WTC11 (cell line): ENCODE measurements at regions of chr19 and their contacts with region 1.

Region 1: DNA sequence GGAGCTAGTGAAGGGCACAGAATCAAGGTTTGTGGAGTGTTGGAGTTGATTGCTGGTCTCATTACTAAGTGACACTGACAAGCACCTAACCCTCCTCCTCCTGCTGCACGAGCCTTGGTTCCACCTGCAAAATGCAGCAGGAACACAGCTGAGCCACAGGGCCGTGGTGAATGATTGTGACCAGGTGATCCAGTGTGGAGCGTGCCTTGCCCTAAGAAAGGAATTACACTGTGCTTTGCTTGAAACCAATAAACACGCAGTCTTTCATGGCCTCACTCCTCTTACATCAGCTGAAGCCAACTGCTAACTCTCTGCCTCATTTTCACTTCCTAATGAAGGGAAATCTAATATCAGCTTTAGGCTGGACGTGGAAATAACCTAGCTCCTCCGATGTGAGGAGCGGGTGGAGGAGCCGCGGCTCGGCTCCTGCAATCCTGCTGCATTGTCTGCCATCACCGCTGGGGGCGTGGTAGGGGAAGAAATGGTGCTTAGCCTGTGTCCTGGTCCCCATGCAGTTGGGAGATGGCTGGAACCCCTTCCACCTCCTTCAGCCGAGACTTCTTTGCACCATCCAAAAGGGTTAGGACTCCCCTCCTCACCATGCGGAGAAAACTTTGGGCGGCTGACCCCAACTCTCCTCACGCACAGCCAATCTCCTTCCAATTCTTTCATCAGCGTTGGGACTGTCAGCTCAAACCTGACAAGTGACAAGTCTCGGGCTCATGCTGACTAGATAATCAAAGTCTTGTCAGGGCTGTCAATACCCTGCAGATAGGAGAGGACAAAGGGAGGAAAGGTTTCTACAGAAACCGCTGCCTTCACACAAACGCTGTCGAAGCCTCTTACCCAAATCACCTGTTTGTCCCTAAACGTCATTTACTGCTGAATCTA is 427.9 kb downstream of the ZNF536 start:
- DNase-seq: peak; percentile 87
- ATAC-seq: peak; percentile 94
- H3K4me3 Mint-ChIP-seq: no peak overlapping the region
- H3K27ac Mint-ChIP-seq: no peak overlapping the region
- H3K4me1 Mint-ChIP-seq: peaks cover 27% of the 10 kb centered on the region
- H3K27me3 Mint-ChIP-seq: peaks cover 15% of the 10 kb centered on the region
- CTCF ChIP-seq: peak; percentile 75

Region 2: GRCh38 chr19:30621326-30621920 is 178.7 kb before region 1 on chr19:
- CTCF ChIA-PET with region 1: no interaction called
- POLR2A ChIA-PET with region 1: no interaction called
- DNase-seq: no peak
- ATAC-seq: no peak
- H3K4me3 Mint-ChIP-seq: no peak overlapping the region
- H3K27ac Mint-ChIP-seq: no peak overlapping the region
- H3K4me1 Mint-ChIP-seq: peaks cover 11% of the 10 kb centered on the region; the same call in 1 of the 2 replicates
- H3K27me3 Mint-ChIP-seq: 0 out of 2 replicates have a peak, but pooled peaks cover 4% of the 10 kb centered on the region
- CTCF ChIP-seq: no peak

Region 3: DNA sequence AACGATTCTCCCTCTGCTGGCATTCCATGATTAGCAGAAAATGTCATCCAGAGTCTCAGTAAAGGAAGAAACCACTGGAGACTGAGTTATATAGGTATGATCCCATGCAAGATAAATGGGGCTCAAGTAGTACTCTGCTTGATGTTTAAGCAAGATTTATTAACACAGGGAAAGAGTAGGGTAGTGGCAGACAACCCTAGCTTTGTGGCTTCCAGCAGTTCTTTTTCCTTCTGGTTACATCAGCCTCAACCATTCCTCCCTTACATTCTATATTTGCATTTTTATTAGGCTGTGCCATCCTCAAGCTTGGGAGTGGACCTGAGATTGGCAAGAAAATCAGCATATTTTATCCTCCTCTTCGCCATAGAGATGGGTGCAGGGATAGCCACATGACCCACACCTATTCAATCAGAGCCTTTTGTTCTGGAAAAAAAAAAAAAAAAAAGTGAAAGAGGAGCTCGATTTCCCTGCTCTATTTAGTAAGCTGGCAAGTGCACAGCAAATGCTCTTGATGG is 25.8 kb before region 1 on chr19:
- CTCF ChIA-PET with region 1: interaction called, 10 read pairs
- POLR2A ChIA-PET with region 1: no interaction called
- DNase-seq: no peak
- ATAC-seq: no peak
- H3K4me3 Mint-ChIP-seq: no peak overlapping the region
- H3K27ac Mint-ChIP-seq: no peak overlapping the region
- H3K4me1 Mint-ChIP-seq: peaks cover 4% of the 10 kb centered on the region; the same call in 1 of the 2 replicates
- H3K27me3 Mint-ChIP-seq: no peaks in the 10 kb centered on the region
- CTCF ChIP-seq: no peak

Region 4: GRCh38 chr19:30812099-30812678 is 12.1 kb after region 1 on chr19:
- CTCF ChIA-PET with region 1: interaction called, 40 read pairs
- POLR2A ChIA-PET with region 1: no interaction called
- DNase-seq: no peak
- ATAC-seq: no peak
- H3K4me3 Mint-ChIP-seq: no peak overlapping the region
- H3K27ac Mint-ChIP-seq: no peak overlapping the region
- H3K4me1 Mint-ChIP-seq: 0 out of 2 replicates have a peak, but pooled peaks cover 3% of the 10 kb centered on the region
- H3K27me3 Mint-ChIP-seq: no peaks in the 10 kb centered on the region; the same call in 1 of the 2 replicates
- CTCF ChIP-seq: no peak

Region 5: GRCh38 chr19:30887042-30887441 is 86.9 kb after region 1 on chr19:
- CTCF ChIA-PET with region 1: interaction called, 12 read pairs
- POLR2A ChIA-PET with region 1: no interaction called
- DNase-seq: no peak
- ATAC-seq: no peak
- H3K4me3 Mint-ChIP-seq: no peak overlapping the region
- H3K27ac Mint-ChIP-seq: no peak overlapping the region
- H3K4me1 Mint-ChIP-seq: peaks cover 8% of the 10 kb centered on the region; the same call in 1 of the 2 replicates
- H3K27me3 Mint-ChIP-seq: no peaks in the 10 kb centered on the region
- CTCF ChIP-seq: no peak